ENCODE measurements at regions of chr2 and their contacts with region 1.

Region 1: GRCh38 chr2:174697255-174697654 is 67.0 kb downstream of the CHRNA1 start:
- H3K4me3 ChIP-seq: no peak overlapping the region
- H3K27ac ChIP-seq: no peak overlapping the region
- H3K4me1 ChIP-seq: no peaks in the 10 kb centered on the region
- CTCF ChIP-seq: peak; percentile 74

Region 2: GRCh38 chr2:174577967-174578589 is 119.2 kb before region 1 on chr2:
- CTCF ChIA-PET with region 1: interaction called, 13 read pairs
- POLR2A ChIA-PET with region 1: no interaction called
- H3K4me3 ChIP-seq: no peak overlapping the region
- H3K27ac ChIP-seq: no peak overlapping the region
- H3K4me1 ChIP-seq: no peaks in the 10 kb centered on the region
- CTCF ChIP-seq: no peak; the same call in 1 of the 2 replicates

Region 3: DNA sequence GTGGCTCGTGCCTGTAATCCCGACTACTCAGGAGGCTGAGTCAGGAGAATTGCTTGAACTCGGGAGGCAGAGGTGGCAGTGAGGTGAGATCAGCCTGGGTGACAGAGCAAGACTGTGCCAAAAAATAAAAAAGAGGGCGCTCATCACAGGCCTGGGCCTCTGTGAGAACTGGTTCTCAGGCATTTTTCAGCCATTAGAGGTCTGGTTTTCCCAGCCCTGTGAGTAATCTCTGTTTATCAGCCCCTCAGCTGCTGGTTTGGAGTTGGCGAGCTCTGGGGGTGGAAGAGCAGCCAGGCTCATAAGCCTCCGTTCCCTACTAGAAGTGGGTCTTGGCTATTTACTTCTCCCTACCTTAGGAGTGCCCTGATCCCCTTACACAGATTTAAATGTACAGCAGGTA is 14.0 kb after region 1 on chr2:
- CTCF ChIA-PET with region 1: interaction called, 10 read pairs
- POLR2A ChIA-PET with region 1: no interaction called
- H3K4me3 ChIP-seq: no peak overlapping the region
- H3K27ac ChIP-seq: no peak overlapping the region
- H3K4me1 ChIP-seq: no peaks in the 10 kb centered on the region
- CTCF ChIP-seq: no peak

Region 4: DNA sequence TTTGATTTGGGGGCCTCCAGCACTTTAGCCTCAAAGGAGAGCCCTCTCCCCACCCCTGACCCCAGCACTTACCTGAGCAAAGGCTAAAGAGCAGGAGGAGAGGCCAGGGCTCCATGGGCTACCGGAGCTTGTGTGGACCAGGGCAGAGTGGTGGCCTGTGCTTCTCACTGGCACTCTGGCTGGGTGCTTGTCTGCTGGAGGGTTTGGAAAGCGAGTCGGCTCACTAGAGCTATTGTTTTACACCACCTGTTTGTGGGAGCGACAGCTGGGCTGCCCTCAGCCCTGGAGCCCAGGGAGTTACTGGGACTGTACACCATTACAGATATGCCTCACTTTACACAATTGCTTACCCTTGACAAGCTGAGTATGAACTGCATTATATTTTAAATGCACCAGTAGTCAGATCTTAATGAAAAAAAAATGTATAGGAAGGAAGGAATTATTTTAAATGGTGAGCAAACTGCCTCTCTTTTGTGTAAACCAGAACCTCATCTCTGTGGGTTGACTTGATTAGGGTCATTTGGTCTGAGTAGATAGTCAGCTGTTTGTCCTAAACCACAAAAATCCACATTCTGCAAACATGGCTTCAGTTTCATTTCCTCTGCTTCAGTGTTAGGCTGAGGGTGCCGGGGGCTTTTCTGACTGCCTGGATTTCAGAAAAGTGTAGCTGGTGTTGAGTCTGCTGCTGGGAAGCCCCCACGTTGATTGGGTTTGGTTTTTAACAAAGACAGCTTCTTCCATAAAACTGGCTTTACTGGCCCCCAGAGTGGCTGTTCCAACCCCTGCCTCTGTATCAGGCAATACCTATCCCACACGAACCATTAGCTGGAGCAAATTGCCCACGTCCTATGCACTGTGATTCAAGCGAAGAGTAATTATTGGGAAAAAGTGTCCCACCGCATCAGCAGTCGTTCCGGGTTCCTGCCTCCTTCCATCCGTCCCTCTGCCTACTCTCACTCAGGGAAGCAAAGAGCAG is 67.3 kb after region 1 on chr2 and contains the start of gene CHRNA1:
- CTCF ChIA-PET with region 1: interaction called, 10 read pairs
- POLR2A ChIA-PET with region 1: no interaction called
- H3K4me3 ChIP-seq: no peak within 1 kb of the TSS
- H3K27ac ChIP-seq: no peak within 1 kb of the TSS
- H3K4me1 ChIP-seq: peaks cover 4% of the 10 kb centered on the region; the same call in 1 of the 2 replicates
- CTCF ChIP-seq: no peak

Region 5: DNA sequence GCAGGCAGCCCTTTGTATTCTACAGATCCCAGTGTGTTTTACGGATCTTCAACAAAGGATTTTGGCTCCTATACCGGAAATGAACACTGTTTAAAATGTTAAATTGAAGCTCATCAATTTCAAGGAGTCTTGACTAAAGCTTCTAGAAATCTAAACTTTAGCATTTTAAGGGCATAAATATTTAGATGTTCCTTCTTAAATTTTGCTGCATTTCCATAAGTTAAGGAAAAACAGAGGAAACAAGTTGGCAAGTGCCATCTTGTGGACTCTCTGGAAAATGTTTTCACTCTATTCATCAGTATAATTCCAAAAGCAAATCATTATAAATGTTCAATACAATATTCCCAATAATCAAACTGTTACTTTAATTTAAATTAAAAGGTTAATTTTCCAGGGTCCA is 288.4 kb after region 1 on chr2:
- CTCF ChIA-PET with region 1: interaction called, 36 read pairs
- POLR2A ChIA-PET with region 1: no interaction called
- H3K4me3 ChIP-seq: no peak overlapping the region
- H3K27ac ChIP-seq: no peak overlapping the region
- H3K4me1 ChIP-seq: 0 out of 2 replicates have a peak, but pooled peaks cover 4% of the 10 kb centered on the region
- CTCF ChIP-seq: no peak